ENCODE measurements at regions of chr9 and their contacts with region 1.

Region 1: GRCh38 chr9:21616082-21616778 is 134.1 kb upstream of the IFNE start:
- DNase-seq: no peak
- ATAC-seq: no peak
- H3K4me3 ChIP-seq: no peak overlapping the region
- H3K4me3 Mint-ChIP-seq: peak overlapping the region in 2 of 10 donors; percentile 16 to 31
- H3K27ac ChIP-seq: no peak overlapping the region
- H3K27ac Mint-ChIP-seq: no peak overlapping the region
- H3K4me1 ChIP-seq: peaks cover 20 to 39% of the 10 kb centered on the region in 2 donors
- H3K4me1 Mint-ChIP-seq: peaks cover 10 to 53% (median 39%) of the 10 kb centered on the region in 7 donors
- H3K27me3 ChIP-seq: no peaks in the 10 kb centered on the region
- H3K27me3 Mint-ChIP-seq: peaks cover 0 to 4% (median 0%) of the 10 kb centered on the region in 5 donors

Region 2: DNA sequence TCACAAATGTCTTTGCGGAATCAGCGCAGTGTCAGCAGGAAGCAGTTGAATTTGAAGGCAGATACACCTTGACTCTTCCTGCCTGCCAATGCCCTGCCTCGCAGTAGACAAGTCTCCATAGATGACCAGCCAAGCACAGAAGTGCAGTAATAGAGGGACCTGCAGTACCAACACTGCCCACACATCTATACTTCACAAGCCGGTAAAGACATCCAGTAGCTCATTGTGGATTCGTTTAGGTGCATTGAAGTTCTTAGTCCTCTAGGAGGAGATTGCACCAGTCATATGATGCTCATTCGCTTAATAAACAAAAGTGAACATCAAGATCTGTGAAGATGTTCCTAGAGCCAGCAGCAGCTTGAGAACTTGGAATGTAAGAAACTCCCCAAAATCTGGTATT is 224.0 kb before region 1 on chr9:
- CTCF ChIA-PET with region 1: no interaction called
- POLR2A ChIA-PET with region 1: no interaction called
- intact Hi-C with region 1: no loop called
- DNase-seq: peak in 3 of 9 donors; percentile 8 to 14 (median 9)
- ATAC-seq: peak; percentile 81
- H3K4me3 ChIP-seq: no peak overlapping the region
- H3K4me3 Mint-ChIP-seq: no peak overlapping the region
- H3K27ac ChIP-seq: no peak overlapping the region
- H3K27ac Mint-ChIP-seq: no peak overlapping the region
- H3K4me1 ChIP-seq: no peaks in the 10 kb centered on the region
- H3K4me1 Mint-ChIP-seq: peaks cover 5 to 13% (median 9%) of the 10 kb centered on the region in 7 donors
- H3K27me3 ChIP-seq: peaks cover 5 to 10% of the 10 kb centered on the region in 2 donors
- H3K27me3 Mint-ChIP-seq: peaks cover 45 to 81% (median 72%) of the 10 kb centered on the region in 5 donors

Region 3: DNA sequence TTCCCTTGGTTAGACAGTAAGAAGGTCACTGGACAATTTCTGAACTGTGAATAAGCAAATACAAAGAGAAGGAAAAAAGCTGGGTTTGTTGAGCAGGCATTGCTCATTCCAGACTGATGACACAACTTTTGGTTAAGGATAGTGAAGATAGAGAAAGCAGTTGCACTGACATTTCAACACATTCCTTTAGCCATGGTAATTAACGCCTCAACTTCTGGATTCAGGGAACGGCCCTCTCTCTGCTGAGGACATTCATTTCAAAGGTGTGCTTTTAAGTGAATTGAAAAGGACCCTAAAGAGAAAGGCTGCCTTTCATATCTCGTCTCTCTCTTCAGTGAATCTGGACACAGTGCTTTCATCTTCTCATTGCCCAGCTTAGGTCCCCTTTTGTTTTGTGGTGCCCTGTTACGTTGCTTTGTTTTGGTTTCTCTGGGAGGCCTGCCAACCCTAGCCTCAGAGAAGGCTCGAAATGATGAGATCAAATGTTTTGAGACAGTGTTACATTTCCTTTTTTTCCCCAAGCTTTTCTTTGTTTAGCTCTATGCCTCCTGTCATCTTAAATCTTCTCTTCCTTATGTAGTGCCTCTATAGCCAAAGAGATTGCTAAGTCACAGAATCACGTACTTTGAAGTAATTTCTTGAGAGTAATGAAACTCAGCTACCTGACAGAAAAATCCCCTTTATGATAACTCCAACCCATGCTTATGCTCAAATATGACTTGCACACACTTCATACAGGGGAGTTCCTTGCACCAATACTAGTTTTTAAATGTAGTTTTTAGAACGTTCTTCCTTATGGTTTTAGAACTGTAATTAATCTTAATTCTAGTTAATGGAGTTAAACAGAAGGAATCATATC is 39.7 kb before region 1 on chr9:
- CTCF ChIA-PET with region 1: no interaction called
- POLR2A ChIA-PET with region 1: interaction called, 3 read pairs
- intact Hi-C with region 1: loop called (anchors 1 kb)
- DNase-seq: peak in 7 of 9 donors; percentile 44 to 80 (median 60)
- ATAC-seq: peak; percentile 69
- H3K4me3 ChIP-seq: no peak overlapping the region
- H3K4me3 Mint-ChIP-seq: peak overlapping the region; percentile 3 to 77 (median 58)
- H3K27ac ChIP-seq: peak overlapping the region; percentile 48
- H3K27ac Mint-ChIP-seq: peak overlapping the region; percentile 34 to 95 (median 87)
- H3K4me1 ChIP-seq: peaks cover 25 to 33% of the 10 kb centered on the region in 2 donors
- H3K4me1 Mint-ChIP-seq: peaks cover 23 to 51% (median 39%) of the 10 kb centered on the region in 7 donors
- H3K27me3 ChIP-seq: no peaks in the 10 kb centered on the region
- H3K27me3 Mint-ChIP-seq: peaks cover 0 to 34% (median 0%) of the 10 kb centered on the region in 5 donors

Region 4: DNA sequence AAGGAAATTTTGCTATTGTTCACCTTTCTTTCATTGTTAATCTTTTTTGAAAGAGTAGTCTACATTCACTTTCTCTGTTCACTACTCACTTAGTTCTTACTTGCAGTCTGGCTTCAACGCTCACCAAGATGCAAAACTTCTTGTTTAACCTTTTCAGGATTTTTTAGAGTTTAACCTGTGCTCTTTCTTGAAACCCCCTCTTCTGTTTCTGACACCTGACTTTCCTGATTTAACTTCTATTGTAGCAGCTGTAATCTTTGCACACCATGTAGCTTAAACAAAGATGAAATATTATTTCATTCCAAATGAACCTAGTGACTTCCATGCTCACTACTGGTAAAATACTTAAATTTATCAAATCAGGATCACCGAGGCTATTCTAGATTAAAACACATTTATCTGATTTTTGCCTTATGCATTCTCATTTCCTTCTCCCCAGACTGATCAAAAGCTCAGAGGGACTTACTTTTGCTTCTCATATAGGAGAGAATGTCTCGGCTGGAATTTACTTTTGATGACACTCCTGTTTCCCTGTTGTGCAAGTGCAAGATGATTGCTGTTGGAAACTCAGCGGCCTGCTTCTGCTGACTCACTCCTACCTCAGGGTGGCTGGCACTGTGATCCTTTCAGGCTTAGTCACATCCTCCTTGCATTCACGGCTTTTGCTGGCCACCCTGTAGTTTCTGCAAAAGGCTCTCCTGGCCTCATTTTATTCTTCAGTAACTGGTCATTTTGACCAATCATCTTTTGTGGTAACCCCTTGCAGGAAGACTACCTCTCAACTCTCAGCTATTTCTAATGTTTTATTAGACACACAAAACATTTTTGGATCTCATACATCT is 24.8 kb before region 1 on chr9:
- CTCF ChIA-PET with region 1: no interaction called
- POLR2A ChIA-PET with region 1: no interaction called
- intact Hi-C with region 1: loop called in 1 of 2 experiments (anchors 2 kb)
- DNase-seq: peak in 1 of 9 donors; percentile 51
- ATAC-seq: peak; percentile 83
- H3K4me3 ChIP-seq: no peak overlapping the region
- H3K4me3 Mint-ChIP-seq: no peak overlapping the region
- H3K27ac ChIP-seq: no peak overlapping the region
- H3K27ac Mint-ChIP-seq: peak overlapping the region in 1 of 9 donors; percentile 40
- H3K4me1 ChIP-seq: no peaks in the 10 kb centered on the region
- H3K4me1 Mint-ChIP-seq: peaks cover 8 to 25% (median 11%) of the 10 kb centered on the region in 7 donors
- H3K27me3 ChIP-seq: no peaks in the 10 kb centered on the region
- H3K27me3 Mint-ChIP-seq: peaks cover 0 to 7% (median 0%) of the 10 kb centered on the region in 5 donors

Region 5: DNA sequence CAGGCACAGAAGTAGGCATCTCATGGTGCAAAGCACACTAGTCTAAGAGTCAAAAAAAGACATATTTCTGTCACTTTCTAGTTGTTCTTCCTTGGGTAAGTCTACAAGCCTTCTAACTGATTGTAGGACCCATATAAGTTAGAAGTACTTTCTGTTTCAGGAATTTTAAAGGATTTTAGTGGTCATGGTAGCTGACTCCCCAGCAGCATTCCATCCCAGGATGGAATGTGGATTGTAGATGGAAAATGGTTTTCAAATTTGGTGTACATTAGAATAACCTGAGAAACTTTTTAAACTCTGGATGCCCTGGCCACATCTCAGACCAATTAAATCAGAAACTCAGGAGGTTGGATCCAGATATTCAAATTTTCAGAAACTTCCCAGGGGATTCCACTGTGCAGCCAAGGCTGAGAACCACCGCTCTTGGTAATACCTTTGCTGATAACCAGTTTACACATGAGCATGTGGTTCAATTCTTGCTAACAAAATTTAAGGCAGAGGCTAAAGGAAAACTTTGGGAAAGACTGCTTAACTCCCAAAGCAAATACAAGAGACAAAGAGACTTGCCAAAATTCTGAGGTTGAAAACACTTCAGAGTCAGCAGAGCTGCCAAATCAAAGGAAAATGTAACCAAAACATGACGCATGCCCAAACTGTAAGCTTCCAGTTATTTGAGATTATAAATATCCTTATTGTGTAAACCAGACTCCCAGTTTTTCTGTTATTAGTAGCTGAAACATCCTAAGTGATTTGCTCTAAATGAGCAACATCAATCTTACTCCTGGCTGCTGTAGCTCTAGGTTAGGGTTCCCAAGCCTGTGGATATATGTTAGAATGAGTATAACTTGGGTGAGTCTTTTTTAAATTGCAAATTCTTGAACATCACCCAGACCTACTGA is 40.8 kb after region 1 on chr9:
- CTCF ChIA-PET with region 1: no interaction called
- POLR2A ChIA-PET with region 1: no interaction called
- intact Hi-C with region 1: loop called in 1 of 2 experiments (anchors 5 kb)
- DNase-seq: no peak
- ATAC-seq: no peak
- H3K4me3 ChIP-seq: no peak overlapping the region
- H3K4me3 Mint-ChIP-seq: no peak overlapping the region
- H3K27ac ChIP-seq: no peak overlapping the region
- H3K27ac Mint-ChIP-seq: no peak overlapping the region
- H3K4me1 ChIP-seq: no peaks in the 10 kb centered on the region
- H3K4me1 Mint-ChIP-seq: no peaks in the 10 kb centered on the region
- H3K27me3 ChIP-seq: no peaks in the 10 kb centered on the region
- H3K27me3 Mint-ChIP-seq: peaks cover 0 to 11% (median 0%) of the 10 kb centered on the region in 5 donors

Region 6: GRCh38 chr9:21709464-21710058 is 93.3 kb after region 1 on chr9:
- CTCF ChIA-PET with region 1: no interaction called
- POLR2A ChIA-PET with region 1: no interaction called
- intact Hi-C with region 1: loop called in 1 of 2 experiments (anchors 5 kb)
- DNase-seq: peak; percentile 14 to 56 (median 46)
- ATAC-seq: peak; percentile 88
- H3K4me3 ChIP-seq: no peak overlapping the region
- H3K4me3 Mint-ChIP-seq: no peak overlapping the region
- H3K27ac ChIP-seq: no peak overlapping the region
- H3K27ac Mint-ChIP-seq: no peak overlapping the region
- H3K4me1 ChIP-seq: no peaks in the 10 kb centered on the region
- H3K4me1 Mint-ChIP-seq: peaks cover 0 to 22% (median 15%) of the 10 kb centered on the region in 7 donors
- H3K27me3 ChIP-seq: no peaks in the 10 kb centered on the region
- H3K27me3 Mint-ChIP-seq: peaks cover 0 to 27% (median 0%) of the 10 kb centered on the region in 5 donors

Measured in naive thymus-derived CD4-positive, alpha-beta T cell (primary cell).